ENCODE measurements at regions of chr12 and their contacts with region 1.

Region 1: GRCh38 chr12:93378373-93379325 is 924 bp downstream of the NUDT4 start:
- DNase-seq: peak; percentile 64
- H3K4me3 Mint-ChIP-seq: peak overlapping the region; percentile 98
- H3K27ac Mint-ChIP-seq: peak overlapping the region; percentile 50
- H3K4me1 Mint-ChIP-seq: peaks cover 24% of the 10 kb centered on the region
- H3K27me3 Mint-ChIP-seq: no peaks in the 10 kb centered on the region
- CTCF ChIP-seq: no peak

Region 2: DNA sequence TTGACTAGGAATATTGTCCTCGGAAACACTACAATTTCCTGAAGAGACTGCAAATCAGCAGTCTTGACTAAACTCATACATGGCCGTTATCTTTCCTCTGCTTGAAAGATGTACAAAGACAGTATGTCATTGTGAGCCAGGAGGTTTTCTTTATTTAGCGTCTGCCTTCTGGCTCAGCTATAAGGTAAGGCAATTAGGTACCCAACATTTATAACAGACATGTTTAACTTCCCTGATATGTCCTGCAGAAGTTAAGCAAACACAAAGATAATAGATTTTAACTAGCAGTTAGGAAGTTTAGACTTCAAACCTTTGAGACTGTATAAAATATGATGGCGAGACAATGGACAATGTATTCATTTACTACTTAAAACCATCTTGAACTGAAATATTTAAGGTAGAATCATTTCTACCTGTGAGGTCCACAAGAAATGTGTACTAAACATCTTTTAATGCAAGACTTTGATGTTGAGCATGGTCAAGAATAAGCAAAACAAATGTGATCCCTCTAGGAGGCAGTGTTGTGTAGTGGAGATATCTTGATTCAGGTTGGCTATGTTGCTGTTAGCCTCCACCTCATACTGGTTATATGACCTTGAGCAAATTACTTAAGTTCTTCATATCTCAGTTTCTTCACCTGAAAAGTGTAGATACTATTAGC is 353.4 kb before region 1 on chr12:
- CTCF ChIA-PET with region 1: interaction called, 14 read pairs
- POLR2A ChIA-PET with region 1: interaction called, 3 read pairs
- intact Hi-C with region 1: loop called (anchors 1 kb)
- DNase-seq: peak; percentile 70
- H3K4me3 Mint-ChIP-seq: no peak overlapping the region
- H3K27ac Mint-ChIP-seq: no peak overlapping the region
- H3K4me1 Mint-ChIP-seq: no peaks in the 10 kb centered on the region
- H3K27me3 Mint-ChIP-seq: no peaks in the 10 kb centered on the region
- CTCF ChIP-seq: peak; percentile 51

Region 3: GRCh38 chr12:93121729-93122488 is 256.7 kb before region 1 on chr12:
- CTCF ChIA-PET with region 1: interaction called, 29 read pairs
- POLR2A ChIA-PET with region 1: interaction called, 53 read pairs
- intact Hi-C with region 1: loop called (anchors 2 kb)
- DNase-seq: peak; percentile 48
- H3K4me3 Mint-ChIP-seq: peak overlapping the region; percentile 24
- H3K27ac Mint-ChIP-seq: peak overlapping the region; percentile 94
- H3K4me1 Mint-ChIP-seq: peaks cover 27% of the 10 kb centered on the region
- H3K27me3 Mint-ChIP-seq: no peaks in the 10 kb centered on the region
- CTCF ChIP-seq: no peak

Region 4: GRCh38 chr12:93137656-93138612 is 240.7 kb before region 1 on chr12:
- CTCF ChIA-PET with region 1: interaction called, 10 read pairs
- POLR2A ChIA-PET with region 1: interaction called, 49 read pairs
- intact Hi-C with region 1: no loop called
- DNase-seq: peak; percentile 96
- H3K4me3 Mint-ChIP-seq: peak overlapping the region; percentile 4
- H3K27ac Mint-ChIP-seq: peak overlapping the region; percentile 78
- H3K4me1 Mint-ChIP-seq: peaks cover 47% of the 10 kb centered on the region
- H3K27me3 Mint-ChIP-seq: no peaks in the 10 kb centered on the region
- CTCF ChIP-seq: no peak

Region 5: GRCh38 chr12:93397412-93397811 is 18.8 kb after region 1 on chr12:
- CTCF ChIA-PET with region 1: interaction called, 40 read pairs
- POLR2A ChIA-PET with region 1: interaction called, 5 read pairs
- intact Hi-C with region 1: no loop called
- DNase-seq: no peak
- H3K4me3 Mint-ChIP-seq: no peak overlapping the region
- H3K27ac Mint-ChIP-seq: no peak overlapping the region
- H3K4me1 Mint-ChIP-seq: no peaks in the 10 kb centered on the region
- H3K27me3 Mint-ChIP-seq: no peaks in the 10 kb centered on the region
- CTCF ChIP-seq: no peak

Measured in MCF 10A (cell line).